Activated T-helper 1 cell treated with anti-CD3 and anti-CD28 coated beads, Interleukin-12 subunit alpha, Interleukin-12 subunit beta, Interleukin-2, Interleukin-4 antibody, amounts not matched to agents 30 ng/mL and 10 ng/mL and 1 ng/mL, durations not matched to agents 14 hours and 24 hours and 36 hours (primary cell): ENCODE measurements at regions of chr20 and their contacts with region 1.

Region 1: GRCh38 chr20:45857114-45857881 is at the starts of genes ACOT8 and ZSWIM3:
- DNase-seq: peak; percentile 95
- H3K4me3 Mint-ChIP-seq: peak within 1 kb of the TSS; percentile 97
- H3K27ac Mint-ChIP-seq: peak within 1 kb of the TSS; percentile 98
- H3K4me1 Mint-ChIP-seq: peaks cover 33% of the 10 kb centered on the region
- H3K27me3 Mint-ChIP-seq: no peaks in the 10 kb centered on the region
- total RNA-seq, gene ACOT8: 26.5 and 27.2 TPM in 2 replicates
- total RNA-seq, gene ZSWIM3: 5.8 and 6.2 TPM in 2 replicates

Region 2: GRCh38 chr20:45771182-45771759 is 86.0 kb before region 1 on chr20:
- intact Hi-C with region 1: no loop called
- DNase-seq: peak; percentile 66
- H3K4me3 Mint-ChIP-seq: no peak overlapping the region
- H3K27ac Mint-ChIP-seq: no peak overlapping the region
- H3K4me1 Mint-ChIP-seq: peaks cover 6% of the 10 kb centered on the region
- H3K27me3 Mint-ChIP-seq: peaks cover 14% of the 10 kb centered on the region

Region 3: GRCh38 chr20:45792332-45792686 is 65.0 kb before region 1 on chr20:
- intact Hi-C with region 1: loop called (anchors 1 kb)
- DNase-seq: no peak
- H3K4me3 Mint-ChIP-seq: peak overlapping the region; percentile 82
- H3K27ac Mint-ChIP-seq: peak overlapping the region; percentile 89
- H3K4me1 Mint-ChIP-seq: peaks cover 24% of the 10 kb centered on the region
- H3K27me3 Mint-ChIP-seq: peaks cover 3% of the 10 kb centered on the region

Region 4: DNA sequence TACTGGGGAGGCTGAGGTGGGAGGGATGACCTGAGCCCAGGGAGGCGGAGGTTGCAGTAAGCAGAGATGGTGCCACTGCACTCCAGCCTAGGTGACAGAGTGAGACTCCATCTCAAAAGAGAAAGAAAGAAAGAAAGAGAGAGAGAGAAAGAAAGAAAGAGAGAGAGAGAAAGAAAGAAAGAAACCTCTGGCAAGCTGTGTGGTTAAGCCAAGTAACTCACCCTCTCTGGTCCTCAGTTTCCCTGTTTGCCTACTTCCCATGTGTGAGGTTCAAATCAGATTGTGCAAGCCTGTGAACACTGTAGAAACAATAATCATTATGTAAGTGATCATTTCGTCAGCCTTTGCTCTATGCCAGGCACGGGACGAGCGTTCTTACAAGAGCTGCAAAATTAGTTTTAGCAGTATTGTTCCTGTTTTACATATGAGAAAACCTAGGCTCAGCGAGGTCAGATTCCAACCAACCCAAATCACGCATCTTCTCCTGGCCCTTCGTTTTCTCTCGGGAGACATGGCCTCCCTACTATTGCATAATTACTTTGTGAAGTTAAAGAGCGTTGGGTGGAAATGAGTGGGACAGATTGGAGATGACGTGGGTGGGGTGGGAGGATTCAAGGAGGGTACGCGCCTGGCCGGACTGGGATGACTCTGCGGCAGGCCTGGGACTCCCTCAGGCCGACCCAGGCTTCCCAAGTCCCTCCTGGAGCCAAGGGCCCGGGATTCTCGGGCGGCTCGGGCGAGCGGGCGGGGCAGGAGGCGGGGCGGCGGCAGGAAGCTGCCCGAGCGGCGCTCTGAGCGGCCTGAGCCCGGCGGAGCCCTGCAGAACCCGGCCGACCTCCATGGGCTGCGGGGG is 24.0 kb before region 1 on chr20 and contains the start of gene SNX21:
- intact Hi-C with region 1: loop called (anchors 1 kb)
- DNase-seq: peak; percentile 12
- H3K4me3 Mint-ChIP-seq: peak within 1 kb of the TSS; percentile 85
- H3K27ac Mint-ChIP-seq: peak within 1 kb of the TSS; percentile 31
- H3K4me1 Mint-ChIP-seq: peaks cover 9% of the 10 kb centered on the region
- H3K27me3 Mint-ChIP-seq: peaks cover 4% of the 10 kb centered on the region
- total RNA-seq, gene SNX21: 0.75 and 1.1 TPM in 2 replicates

Region 5: GRCh38 chr20:45890985-45891983 is 34.0 kb after region 1 on chr20 and contains the starts of genes CTSA and NEURL2:
- intact Hi-C with region 1: loop called (anchors 1 kb)
- DNase-seq: peak; percentile 80
- H3K4me3 Mint-ChIP-seq: peak within 1 kb of the TSS; percentile 91
- H3K27ac Mint-ChIP-seq: peak within 1 kb of the TSS; percentile 85
- H3K4me1 Mint-ChIP-seq: peaks cover 14% of the 10 kb centered on the region
- H3K27me3 Mint-ChIP-seq: peaks cover 1% of the 10 kb centered on the region
- total RNA-seq, gene CTSA: 43.0 and 46.9 TPM in 2 replicates
- total RNA-seq, gene NEURL2: 1.9 and 3.4 TPM in 2 replicates

Region 6: DNA sequence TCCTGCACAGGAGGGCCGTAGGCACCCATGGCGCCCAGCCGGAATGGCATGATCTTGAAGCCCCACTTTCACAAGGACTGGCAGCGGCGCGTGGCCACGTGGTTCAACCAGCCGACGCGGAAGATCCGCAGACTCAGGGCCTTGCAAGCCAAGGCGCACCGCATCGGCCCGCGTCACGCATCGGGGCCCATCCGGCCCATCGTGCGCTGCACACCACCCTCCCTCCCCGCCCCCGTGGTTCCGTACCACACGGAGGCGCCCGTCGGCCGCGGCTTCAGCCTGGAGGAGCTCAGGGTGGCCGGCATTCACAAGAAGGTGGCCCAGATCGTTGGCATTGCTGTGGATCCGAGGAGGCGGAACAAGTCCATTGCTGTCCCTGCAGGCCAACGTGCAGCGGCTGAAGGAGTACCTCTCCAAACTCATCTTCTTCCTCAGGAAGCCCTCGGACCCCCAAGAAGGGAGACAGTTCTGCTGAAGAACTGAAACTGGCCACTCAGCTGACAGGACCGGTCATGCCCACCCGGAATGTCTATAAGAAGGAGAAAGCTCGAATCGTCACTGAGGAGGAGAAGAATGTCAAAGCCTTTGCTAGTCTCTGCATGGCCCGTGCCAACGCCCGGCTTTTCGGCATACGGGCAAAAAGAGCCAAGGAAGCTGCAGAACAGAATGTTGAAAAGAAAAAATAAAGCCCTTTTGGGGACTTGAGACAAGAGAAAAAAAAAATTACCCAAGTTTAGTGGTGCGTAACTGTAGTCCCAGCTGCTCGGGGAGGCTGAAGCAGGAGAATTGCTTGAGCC is 242.4 kb after region 1 on chr20:
- intact Hi-C with region 1: no loop called
- DNase-seq: no peak
- H3K4me3 Mint-ChIP-seq: no peak overlapping the region
- H3K27ac Mint-ChIP-seq: no peak overlapping the region
- H3K4me1 Mint-ChIP-seq: no peaks in the 10 kb centered on the region
- H3K27me3 Mint-ChIP-seq: peaks cover 44% of the 10 kb centered on the region

Region 7: GRCh38 chr20:46117704-46118467 is 260.6 kb after region 1 on chr20 and contains the start of gene CD40:
- intact Hi-C with region 1: no loop called
- DNase-seq: peak; percentile 60
- H3K4me3 Mint-ChIP-seq: peak within 1 kb of the TSS; percentile 90
- H3K27ac Mint-ChIP-seq: no peak within 1 kb of the TSS
- H3K4me1 Mint-ChIP-seq: peaks cover 11% of the 10 kb centered on the region
- H3K27me3 Mint-ChIP-seq: peaks cover 10% of the 10 kb centered on the region
- total RNA-seq, gene CD40: 2.0 TPM in 2 replicates